Naive thymus-derived CD8-positive, alpha-beta T cell (primary cell): ENCODE measurements at regions of chr1 and their contacts with region 1.

Region 1: DNA sequence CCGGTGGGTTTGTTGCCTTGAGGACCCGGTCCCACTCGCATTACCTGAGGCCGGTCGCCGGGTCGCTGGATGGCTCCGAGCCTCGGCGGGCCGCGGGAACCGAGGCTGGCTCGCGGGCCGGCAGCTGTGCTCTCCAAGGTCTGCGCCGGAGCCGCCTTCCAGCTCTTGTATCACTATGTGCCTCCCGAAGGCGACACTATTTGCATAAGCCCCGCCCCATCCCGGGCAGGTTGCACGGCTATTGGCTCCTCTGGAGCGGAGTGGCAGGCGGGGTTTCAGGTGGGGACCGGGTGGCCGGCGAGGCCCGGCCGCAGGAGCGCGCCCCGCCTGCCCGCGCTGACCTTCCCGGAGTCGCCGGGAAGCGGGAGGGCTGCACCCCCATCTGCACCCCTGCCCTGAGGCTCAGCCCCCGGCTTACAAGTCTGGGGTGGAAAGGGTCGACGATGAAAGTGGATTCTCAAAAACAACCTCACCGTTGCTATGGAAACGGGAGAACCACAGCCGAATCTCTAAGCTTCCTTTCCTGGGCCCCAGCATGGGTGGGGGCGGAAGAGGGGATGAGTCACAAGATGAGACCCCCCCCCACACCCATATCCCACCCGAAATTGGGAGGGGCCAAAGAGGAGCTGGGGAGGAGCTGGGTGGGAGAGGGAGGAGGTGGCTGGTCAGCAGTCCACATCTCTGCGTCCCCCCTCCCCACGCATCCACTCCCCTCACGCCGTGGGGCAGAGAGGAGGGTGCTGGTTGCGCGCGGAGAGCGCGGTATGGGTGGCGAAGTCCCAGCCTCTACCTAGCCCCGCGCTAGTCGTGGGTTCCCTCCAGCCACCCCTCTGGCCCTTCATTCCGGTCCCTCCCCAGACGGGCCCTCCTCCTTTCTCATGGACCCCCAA is at the start of gene HPCAL4:
- DNase-seq: peak; percentile 78 to 96 (median 88)
- ATAC-seq: peak; percentile 83 to 87
- H3K4me3 Mint-ChIP-seq: peak within 1 kb of the TSS; percentile 80 to 97 (median 87)
- H3K27ac Mint-ChIP-seq: peak within 1 kb of the TSS; percentile 58 to 95 (median 90)
- H3K4me1 Mint-ChIP-seq: peaks cover 22 to 47% (median 34%) of the 10 kb centered on the region in 4 donors
- H3K27me3 Mint-ChIP-seq: peaks cover 0 to 34% (median 2%) of the 10 kb centered on the region in 5 donors
- polyA plus RNA-seq, gene HPCAL4: 2.1 to 4.6 (median 3.9) TPM

Region 2: DNA sequence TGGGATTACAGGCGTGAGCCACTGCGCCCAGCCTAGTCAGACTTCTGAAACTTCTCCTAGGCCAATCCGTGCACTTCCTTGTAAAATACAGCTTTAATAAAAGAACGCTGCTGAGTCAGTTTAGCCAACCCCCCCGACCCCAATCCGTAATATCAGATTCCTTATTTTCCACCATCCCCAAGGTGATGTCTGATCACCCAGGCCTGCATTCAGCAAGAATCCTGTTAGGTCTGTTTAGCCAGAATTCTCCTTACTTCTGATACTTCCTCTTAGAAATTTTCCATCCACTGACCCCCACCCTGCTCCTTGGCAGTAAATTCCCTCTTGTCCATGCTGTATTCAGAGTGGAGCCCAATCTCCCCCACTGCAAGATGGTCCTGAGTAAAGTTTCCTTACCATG is 103.4 kb before region 1 on chr1:
- POLR2A ChIA-PET with region 1: no interaction called
- DNase-seq: no peak
- ATAC-seq: no peak
- H3K4me3 Mint-ChIP-seq: no peak overlapping the region
- H3K27ac Mint-ChIP-seq: no peak overlapping the region
- H3K4me1 Mint-ChIP-seq: peaks cover 0 to 2% (median 0%) of the 10 kb centered on the region in 4 donors
- H3K27me3 Mint-ChIP-seq: peaks cover 0 to under 1% (median 0%) of the 10 kb centered on the region in 5 donors

Region 3: GRCh38 chr1:39672551-39672947 is 19.0 kb before region 1 on chr1:
- POLR2A ChIA-PET with region 1: interaction called, 37 read pairs
- DNase-seq: peak in 7 of 10 donors; percentile 14 to 71 (median 31)
- ATAC-seq: peak; percentile 33 to 37
- H3K4me3 Mint-ChIP-seq: peak overlapping the region in 9 of 10 donors; percentile 53 to 79 (median 71)
- H3K27ac Mint-ChIP-seq: peak overlapping the region in 2 of 10 donors; percentile 11 to 43
- H3K4me1 Mint-ChIP-seq: peaks cover 0 to 16% (median 5%) of the 10 kb centered on the region in 4 donors
- H3K27me3 Mint-ChIP-seq: peaks cover 16 to 44% (median 32%) of the 10 kb centered on the region in 5 donors

Region 4: GRCh38 chr1:39680751-39681150 is 10.8 kb before region 1 on chr1:
- POLR2A ChIA-PET with region 1: interaction called, 44 read pairs
- DNase-seq: peak in 3 of 10 donors; percentile 30 to 42 (median 33)
- ATAC-seq: peak; percentile 18 to 70
- H3K4me3 Mint-ChIP-seq: peak overlapping the region in 9 of 10 donors; percentile 43 to 79 (median 70)
- H3K27ac Mint-ChIP-seq: peak overlapping the region; percentile 46 to 92 (median 78)
- H3K4me1 Mint-ChIP-seq: peaks cover 11 to 34% (median 32%) of the 10 kb centered on the region in 4 donors
- H3K27me3 Mint-ChIP-seq: peaks cover 0 to 14% (median 7%) of the 10 kb centered on the region in 5 donors

Region 5: GRCh38 chr1:39738622-39739366 is 47.3 kb after region 1 on chr1 and contains the start of gene PPIE:
- POLR2A ChIA-PET with region 1: interaction called, 28 read pairs
- DNase-seq: peak; percentile 75 to 96 (median 88)
- ATAC-seq: peak; percentile 97
- H3K4me3 Mint-ChIP-seq: peak within 1 kb of the TSS; percentile 89 to 99 (median 97)
- H3K27ac Mint-ChIP-seq: peak within 1 kb of the TSS; percentile 80 to 99 (median 97)
- H3K4me1 Mint-ChIP-seq: peaks cover 18 to 43% (median 41%) of the 10 kb centered on the region in 4 donors
- H3K27me3 Mint-ChIP-seq: peaks cover 3 to 36% (median 12%) of the 10 kb centered on the region in 5 donors
- polyA plus RNA-seq, gene PPIE: 101 to 123 (median 102) TPM